BJ (cell line): ENCODE measurements at regions of chr1 and their contacts with region 1.

Region 1: DNA sequence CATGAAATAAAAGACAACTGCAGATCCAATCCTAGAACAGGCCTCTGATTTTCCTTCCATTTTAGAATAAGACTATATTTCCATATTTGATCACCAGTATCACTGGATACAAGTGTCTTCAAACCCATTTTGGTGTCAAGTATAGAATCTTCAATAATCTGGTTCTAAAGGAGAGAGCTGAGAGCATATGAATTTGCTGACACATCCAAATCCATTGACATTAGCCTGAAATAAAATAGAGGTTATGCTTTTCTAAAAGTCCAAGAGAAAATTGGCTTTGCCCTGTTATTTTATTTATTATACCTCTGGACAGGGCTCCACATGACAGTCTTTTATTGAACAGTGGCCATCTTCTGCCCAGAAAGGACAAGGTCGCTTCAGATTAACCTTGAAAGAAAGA is 28.6 kb downstream of the ERO1B start:
- DNase-seq: no peak
- H3K4me3 ChIP-seq: no peak overlapping the region
- H3K27me3 ChIP-seq: no peaks in the 10 kb centered on the region
- CTCF ChIP-seq: no peak

Region 2: GRCh38 chr1:236206548-236206947 is 46.6 kb before region 1 on chr1:
- CTCF ChIA-PET with region 1: no interaction called
- POLR2A ChIA-PET with region 1: no interaction called
- DNase-seq: no peak
- H3K4me3 ChIP-seq: no peak overlapping the region
- H3K27me3 ChIP-seq: no peaks in the 10 kb centered on the region
- CTCF ChIP-seq: no peak

Region 3: DNA sequence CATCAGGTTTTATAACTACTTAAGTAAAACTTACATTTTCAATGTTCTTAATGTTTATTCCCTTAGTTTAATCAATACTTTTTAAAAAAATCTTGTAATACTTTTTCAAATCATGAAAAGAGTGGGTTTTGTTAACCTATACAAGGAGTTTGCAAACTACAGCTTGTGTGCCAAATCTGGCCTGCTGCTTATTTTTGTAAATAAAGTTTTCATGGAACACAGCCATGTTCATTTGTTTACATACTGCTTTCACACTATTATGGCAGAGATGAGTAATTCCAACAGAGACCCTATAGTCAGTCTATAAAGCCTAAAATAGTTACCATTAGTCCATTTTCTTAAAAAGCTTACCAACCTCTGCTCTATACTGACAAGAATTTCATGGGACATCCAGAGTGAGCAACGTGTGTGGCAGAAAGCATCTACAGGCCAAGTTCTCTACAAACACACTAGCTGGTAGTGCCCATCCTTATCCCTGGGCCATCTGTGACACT is 14.0 kb before region 1 on chr1:
- CTCF ChIA-PET with region 1: interaction called, 3 read pairs
- POLR2A ChIA-PET with region 1: interaction called, 21 read pairs
- DNase-seq: no peak
- H3K4me3 ChIP-seq: no peak overlapping the region
- H3K27me3 ChIP-seq: no peaks in the 10 kb centered on the region
- CTCF ChIP-seq: no peak